Ovary (tissue), 10 donors: ENCODE measurements at regions of chr5 and their contacts with region 1.

Region 1: DNA sequence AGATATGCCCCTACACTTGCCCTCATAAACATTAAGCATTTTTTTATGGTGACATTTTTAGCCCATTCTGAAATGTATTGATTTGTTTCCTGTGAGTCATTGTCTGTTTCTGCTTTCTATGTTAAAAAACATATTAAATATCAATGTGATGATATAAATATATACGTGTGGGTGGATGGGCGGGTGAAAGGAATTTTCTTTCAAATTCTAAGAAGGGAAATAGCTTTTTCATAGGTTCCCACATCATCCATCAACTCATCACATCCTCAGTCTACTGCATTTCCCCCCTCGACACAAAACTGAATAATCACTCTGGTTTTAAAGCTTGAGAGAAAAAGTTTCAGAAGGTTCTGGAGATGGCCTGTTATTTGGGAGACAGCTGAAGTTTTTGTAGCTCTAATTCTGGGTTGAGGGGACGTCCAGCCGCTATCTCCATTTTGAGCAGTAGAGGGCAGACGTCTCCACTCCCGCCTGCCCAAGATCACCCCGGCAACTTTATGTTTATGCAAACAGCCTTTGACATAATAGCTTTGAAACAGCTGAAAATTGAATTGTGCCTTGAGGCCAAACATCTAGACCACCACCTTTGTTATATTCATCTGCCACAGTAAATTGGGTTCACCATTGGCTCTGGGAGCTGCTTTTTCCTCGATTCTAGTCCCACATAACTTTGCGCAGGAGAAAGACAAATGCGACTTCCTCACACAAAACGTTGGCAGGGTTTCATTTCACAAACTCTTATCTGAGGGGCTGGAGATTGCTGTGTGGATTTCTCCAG is 216.2 kb upstream of the CLINT1 start:
- DNase-seq: peak; percentile 47 to 77 (median 69)
- H3K4me3 ChIP-seq: peak overlapping the region; percentile 32
- H3K27ac ChIP-seq: no peak overlapping the region
- H3K4me1 ChIP-seq: peaks cover 4% of the 10 kb centered on the region
- H3K27me3 ChIP-seq: no peaks in the 10 kb centered on the region
- CTCF ChIP-seq: peak; percentile 43 to 69 (median 65)
- EP300 ChIP-seq: no peak
- POLR2A ChIP-seq: no peak

Region 2: GRCh38 chr5:158154226-158155005 is 79.2 kb after region 1 on chr5:
- intact Hi-C with region 1: no loop called
- DNase-seq: peak in 1 of 5 donors; percentile 48
- H3K4me3 ChIP-seq: no peak overlapping the region
- H3K27ac ChIP-seq: no peak overlapping the region
- H3K4me1 ChIP-seq: no peaks in the 10 kb centered on the region
- H3K27me3 ChIP-seq: no peaks in the 10 kb centered on the region
- CTCF ChIP-seq: no peak
- EP300 ChIP-seq: no peak
- POLR2A ChIP-seq: no peak

Region 3: DNA sequence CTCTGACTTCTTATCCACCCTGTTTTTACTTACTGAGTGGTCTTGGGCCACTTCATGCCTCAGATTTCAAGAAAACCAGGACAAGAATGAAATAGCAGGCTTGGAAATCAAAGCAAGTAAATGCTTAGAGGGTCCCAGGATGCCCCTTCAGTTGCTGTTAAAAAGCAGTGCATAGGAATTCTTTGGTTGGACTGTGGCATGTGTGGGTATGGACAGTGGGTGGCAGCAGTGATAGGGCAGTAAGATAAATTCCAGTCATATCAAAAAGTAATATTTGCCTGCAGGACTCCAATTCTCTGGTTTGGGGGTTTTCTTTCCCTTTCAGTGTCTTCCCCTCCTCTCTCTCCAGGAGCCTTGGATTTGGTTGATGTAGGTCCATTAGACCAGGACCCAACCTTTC is 90.5 kb after region 1 on chr5:
- intact Hi-C with region 1: loop called in 1 of 4 experiments (anchors 10 kb)
- DNase-seq: no peak
- H3K4me3 ChIP-seq: no peak overlapping the region
- H3K27ac ChIP-seq: no peak overlapping the region
- H3K4me1 ChIP-seq: no peaks in the 10 kb centered on the region
- H3K27me3 ChIP-seq: no peaks in the 10 kb centered on the region
- CTCF ChIP-seq: no peak
- EP300 ChIP-seq: no peak
- POLR2A ChIP-seq: no peak

Region 4: DNA sequence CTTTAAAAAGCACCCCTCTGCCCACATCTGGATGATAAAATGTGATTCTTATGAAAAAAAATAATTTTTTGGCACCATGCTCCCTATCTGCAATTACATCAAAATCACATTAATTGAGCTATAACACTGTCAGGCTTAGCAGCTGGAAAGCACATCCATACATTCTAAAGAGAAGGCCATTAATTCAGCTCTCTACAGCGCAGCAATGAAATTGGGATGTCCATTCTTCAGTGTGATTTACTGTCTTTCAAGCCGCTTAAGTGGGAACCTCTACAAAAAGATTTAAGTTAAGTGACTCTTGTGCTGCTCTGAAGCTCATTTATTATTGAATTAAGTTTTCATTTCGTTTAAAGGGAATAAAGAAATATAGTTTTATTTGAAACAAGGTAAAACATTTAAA is 853.2 kb after region 1 on chr5:
- intact Hi-C with region 1: loop called in 1 of 4 experiments (anchors 5 kb)
- DNase-seq: no peak
- H3K4me3 ChIP-seq: no peak overlapping the region
- H3K27ac ChIP-seq: no peak overlapping the region
- H3K4me1 ChIP-seq: no peaks in the 10 kb centered on the region
- H3K27me3 ChIP-seq: no peaks in the 10 kb centered on the region
- CTCF ChIP-seq: no peak
- EP300 ChIP-seq: no peak
- POLR2A ChIP-seq: no peak